GM18951 (cell line): ENCODE measurements at regions of chr3 and their contacts with region 1.

Region 1: DNA sequence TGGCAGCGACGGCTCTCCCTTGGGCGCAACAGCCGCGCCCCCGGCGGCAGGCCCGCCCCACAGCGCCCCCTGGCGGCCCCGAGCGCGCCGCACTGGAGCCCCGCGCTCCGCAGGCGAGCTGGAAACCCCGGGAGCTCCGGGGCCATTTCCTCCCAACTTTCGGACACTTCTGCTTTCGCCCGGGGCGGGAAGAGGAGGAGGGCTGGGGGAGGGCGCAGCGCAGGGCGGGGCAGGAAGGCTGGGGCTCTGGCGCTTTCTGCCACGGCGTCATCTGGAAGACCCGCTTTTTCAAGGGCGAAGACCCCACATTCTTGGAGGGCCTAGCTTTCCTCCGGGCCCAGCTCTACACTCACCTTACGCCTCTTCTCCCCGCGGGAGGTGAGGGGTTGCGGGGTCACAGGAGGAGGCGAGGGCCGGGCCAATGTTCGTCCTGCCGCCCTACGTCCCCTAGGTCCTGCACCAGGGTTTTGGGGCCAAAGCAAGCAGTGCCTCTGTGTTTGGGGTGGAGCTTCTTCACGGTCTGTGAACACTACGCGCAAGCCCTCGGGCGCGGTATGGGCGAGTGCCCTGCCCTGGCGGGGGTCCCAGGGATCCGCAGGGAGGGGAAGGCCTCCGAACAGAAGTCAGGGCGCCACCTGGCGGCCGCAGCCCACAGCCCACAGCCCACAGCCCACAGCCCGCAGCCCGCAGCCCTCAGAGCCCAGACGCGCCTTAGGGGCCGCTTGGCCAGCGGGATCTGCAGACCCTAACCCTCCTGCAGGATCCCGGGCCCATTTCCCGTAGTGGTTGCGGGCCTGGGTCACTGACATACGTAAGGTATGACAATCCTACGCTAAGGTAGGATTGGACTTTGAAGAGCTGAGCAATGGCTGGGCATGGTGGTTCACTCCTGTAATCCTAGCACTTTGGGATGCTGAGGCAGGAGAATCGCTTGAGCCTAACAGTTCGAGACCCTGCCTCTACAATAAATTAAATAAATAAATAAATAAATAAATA is 31.1 kb downstream of the FOXL2 start:
- POLR2A ChIP-seq: no peak

Region 2: GRCh38 chr3:138608322-138609135 is 307.3 kb before region 1 on chr3 and contains the start of gene FAIM:
- in situ Hi-C with region 1: loop called (anchors 5 kb)
- POLR2A ChIP-seq: peak; percentile 64

Region 3: GRCh38 chr3:138696666-138697370 is 219.0 kb before region 1 on chr3:
- in situ Hi-C with region 1: loop called (anchors 5 kb)
- POLR2A ChIP-seq: no peak

Region 4: DNA sequence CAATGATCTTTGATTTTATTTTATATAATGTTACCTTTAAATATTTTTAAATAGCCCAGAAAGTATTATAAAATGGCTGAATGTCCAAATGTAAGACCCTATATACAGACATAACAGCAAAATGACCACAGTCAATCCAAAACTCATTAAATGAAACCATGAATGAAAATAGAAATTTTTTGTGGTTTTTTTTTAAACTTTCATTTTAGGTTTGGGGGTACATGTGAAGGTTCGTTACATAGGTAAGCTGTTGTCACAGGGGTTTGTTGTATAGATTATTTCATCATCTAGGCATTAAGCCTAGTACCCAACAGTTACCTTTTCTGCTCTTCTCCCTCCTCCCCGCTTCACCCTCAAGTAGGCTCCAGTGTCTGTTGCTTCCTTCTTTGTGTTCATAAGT is 198.5 kb before region 1 on chr3:
- in situ Hi-C with region 1: no loop called
- POLR2A ChIP-seq: no peak

Region 5: GRCh38 chr3:139473155-139473771 is 557.5 kb after region 1 on chr3:
- in situ Hi-C with region 1: no loop called
- POLR2A ChIP-seq: no peak